ENCODE measurements at regions of chr13 and their contacts with region 1.

Region 1: DNA sequence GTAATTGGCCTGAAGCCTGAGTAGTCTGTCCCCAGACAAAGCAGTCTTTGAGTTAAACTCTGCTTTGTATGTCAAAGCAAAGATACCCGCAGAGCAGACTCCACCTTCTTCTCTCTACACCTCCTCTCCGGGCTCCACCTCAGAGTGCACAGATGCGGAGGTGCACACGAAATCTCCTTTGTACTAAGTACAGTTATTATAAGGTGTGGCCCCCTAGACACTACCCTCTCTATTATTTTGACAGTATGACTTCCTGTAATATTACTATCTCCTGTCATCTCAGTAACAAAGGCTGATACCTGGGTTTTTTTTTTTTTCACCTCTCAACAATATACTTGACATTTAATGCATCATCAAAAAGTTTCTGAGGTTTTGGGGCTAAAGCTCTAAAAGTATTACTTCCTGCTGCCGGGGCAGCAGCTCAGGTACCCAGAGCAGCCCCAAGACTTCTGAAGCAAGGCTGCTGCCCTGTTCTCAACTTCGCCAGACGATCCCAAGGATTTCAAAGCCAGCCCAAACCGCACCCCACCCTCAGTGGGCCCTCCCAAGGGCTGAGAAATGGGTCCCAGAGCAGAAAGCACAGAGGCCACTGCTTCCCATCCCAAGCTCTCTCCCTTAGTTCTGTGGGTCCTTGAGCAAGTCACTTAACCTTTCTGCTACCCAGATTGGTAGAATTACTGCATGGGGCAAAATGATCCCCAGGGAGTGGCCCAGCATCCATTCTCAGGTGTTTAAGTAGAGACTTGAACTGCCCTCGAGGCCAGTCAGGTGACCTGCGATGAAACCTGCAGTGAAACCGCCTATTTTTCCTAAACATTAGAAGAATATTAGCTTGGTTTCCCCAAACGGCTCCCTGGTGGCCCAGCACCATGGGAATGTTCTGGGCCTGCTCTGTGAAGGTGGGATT is 180.6 kb downstream of the FOXO1 start:
- DNase-seq: peak; percentile 52 to 94 (median 70)
- ATAC-seq: peak; percentile 93
- H3K4me3 ChIP-seq: peak overlapping the region; percentile 25
- H3K4me3 Mint-ChIP-seq: peak overlapping the region; percentile 78
- H3K27ac ChIP-seq: peak overlapping the region; percentile 70 to 77
- H3K27ac Mint-ChIP-seq: peak overlapping the region; percentile 94
- H3K4me1 ChIP-seq: peaks cover 95% of the 10 kb centered on the region
- H3K4me1 Mint-ChIP-seq: peaks cover 90% of the 10 kb centered on the region
- H3K27me3 ChIP-seq: no peaks in the 10 kb centered on the region
- H3K27me3 Mint-ChIP-seq: no peaks in the 10 kb centered on the region
- CTCF ChIP-seq: no peak

Region 2: GRCh38 chr13:40190641-40191100 is 295.2 kb before region 1 on chr13:
- CTCF ChIA-PET with region 1: no interaction called
- POLR2A ChIA-PET with region 1: interaction called, 12 read pairs
- intact Hi-C with region 1: loop called (anchors 5 kb)
- DNase-seq: peak; percentile 44 to 92 (median 74)
- ATAC-seq: peak; percentile 45
- H3K4me3 ChIP-seq: no peak overlapping the region
- H3K4me3 Mint-ChIP-seq: peak overlapping the region; percentile 80
- H3K27ac ChIP-seq: peak overlapping the region; percentile 60 to 71
- H3K27ac Mint-ChIP-seq: peak overlapping the region; percentile 99
- H3K4me1 ChIP-seq: peaks cover 65% of the 10 kb centered on the region
- H3K4me1 Mint-ChIP-seq: peaks cover 90% of the 10 kb centered on the region
- H3K27me3 ChIP-seq: no peaks in the 10 kb centered on the region
- H3K27me3 Mint-ChIP-seq: no peaks in the 10 kb centered on the region
- CTCF ChIP-seq: no peak

Region 3: GRCh38 chr13:40388617-40389016 is 97.2 kb before region 1 on chr13:
- CTCF ChIA-PET with region 1: no interaction called
- POLR2A ChIA-PET with region 1: interaction called, 22 read pairs
- intact Hi-C with region 1: loop called in 1 of 2 experiments (anchors 2 kb)
- DNase-seq: peak; percentile 66 to 96 (median 78)
- ATAC-seq: peak; percentile 89
- H3K4me3 ChIP-seq: peak overlapping the region; percentile 57
- H3K4me3 Mint-ChIP-seq: peak overlapping the region; percentile 82
- H3K27ac ChIP-seq: peak overlapping the region; percentile 77 to 96
- H3K27ac Mint-ChIP-seq: peak overlapping the region; percentile 95
- H3K4me1 ChIP-seq: peaks cover 35% of the 10 kb centered on the region
- H3K4me1 Mint-ChIP-seq: peaks cover 54% of the 10 kb centered on the region
- H3K27me3 ChIP-seq: no peaks in the 10 kb centered on the region
- H3K27me3 Mint-ChIP-seq: no peaks in the 10 kb centered on the region
- CTCF ChIP-seq: no peak

Region 4: GRCh38 chr13:40508127-40508526 is 22.3 kb after region 1 on chr13:
- CTCF ChIA-PET with region 1: no interaction called
- POLR2A ChIA-PET with region 1: interaction called, 8 read pairs
- intact Hi-C with region 1: loop called in 1 of 2 experiments (anchors 2 kb)
- DNase-seq: peak in 3 of 14 experiments; percentile 31 to 63 (median 63)
- ATAC-seq: peak; percentile 64
- H3K4me3 ChIP-seq: no peak overlapping the region
- H3K4me3 Mint-ChIP-seq: peak overlapping the region; percentile 67
- H3K27ac ChIP-seq: no peak overlapping the region
- H3K27ac Mint-ChIP-seq: peak overlapping the region; percentile 86
- H3K4me1 ChIP-seq: peaks cover 27% of the 10 kb centered on the region
- H3K4me1 Mint-ChIP-seq: peaks cover 74% of the 10 kb centered on the region
- H3K27me3 ChIP-seq: no peaks in the 10 kb centered on the region
- H3K27me3 Mint-ChIP-seq: no peaks in the 10 kb centered on the region
- CTCF ChIP-seq: no peak

Region 5: GRCh38 chr13:40558656-40559055 is 72.8 kb after region 1 on chr13:
- CTCF ChIA-PET with region 1: no interaction called
- POLR2A ChIA-PET with region 1: no interaction called
- intact Hi-C with region 1: loop called in 1 of 2 experiments (anchors 5 kb)
- DNase-seq: no peak
- ATAC-seq: no peak
- H3K4me3 ChIP-seq: no peak overlapping the region
- H3K4me3 Mint-ChIP-seq: peak overlapping the region; percentile 8
- H3K27ac ChIP-seq: no peak overlapping the region
- H3K27ac Mint-ChIP-seq: peak overlapping the region; percentile 79
- H3K4me1 ChIP-seq: peaks cover 32% of the 10 kb centered on the region
- H3K4me1 Mint-ChIP-seq: peaks cover 98% of the 10 kb centered on the region
- H3K27me3 ChIP-seq: no peaks in the 10 kb centered on the region
- H3K27me3 Mint-ChIP-seq: no peaks in the 10 kb centered on the region
- CTCF ChIP-seq: no peak